HepG2 (cell line): ENCODE measurements at regions of chr15 and their contacts with region 1.

Region 1: GRCh38 chr15:71730277-71731144 is 79.8 kb upstream of the NR2E3 start:
- DNase-seq: peak; percentile 50
- ATAC-seq: peak; percentile 90
- H3K4me3 ChIP-seq: no peak overlapping the region
- H3K27ac ChIP-seq: no peak overlapping the region
- H3K4me1 ChIP-seq: peaks cover 25% of the 10 kb centered on the region
- H3K27me3 ChIP-seq: peaks cover 2 to 5% of the 10 kb centered on the region in 2 experiments; a peak in 2 of 5 replicates
- CTCF ChIP-seq: peak; percentile 89
- EP300 ChIP-seq: no peak
- POLR2A ChIP-seq: no peak
- RAD21 ChIP-seq: peak; percentile 79

Region 2: GRCh38 chr15:71575474-71576045 is 155.0 kb before region 1 on chr15:
- CTCF ChIA-PET with region 1: interaction called, 30 read pairs
- POLR2A ChIA-PET with region 1: no interaction called
- in situ Hi-C with region 1: loop called (anchors 10 kb)
- intact Hi-C with region 1: no loop called
- DNase-seq: peak; percentile 10
- ATAC-seq: no peak
- H3K4me3 ChIP-seq: no peak overlapping the region
- H3K27ac ChIP-seq: no peak overlapping the region
- H3K4me1 ChIP-seq: no peaks in the 10 kb centered on the region
- H3K27me3 ChIP-seq: no peaks in the 10 kb centered on the region
- CTCF ChIP-seq: peak; percentile 63
- EP300 ChIP-seq: no peak
- POLR2A ChIP-seq: no peak
- RAD21 ChIP-seq: peak; percentile 28; the same call in 1 of the 2 replicates

Region 3: GRCh38 chr15:71660501-71660900 is 70.0 kb before region 1 on chr15:
- CTCF ChIA-PET with region 1: no interaction called
- POLR2A ChIA-PET with region 1: no interaction called
- in situ Hi-C with region 1: no loop called
- intact Hi-C with region 1: loop called (anchors 1 kb)
- DNase-seq: no peak
- ATAC-seq: peak; percentile 29; the same call in 2 of the 3 replicates
- H3K4me3 ChIP-seq: peak overlapping the region in 1 of 3 experiments; percentile 2; a peak in 1 of 6 replicates
- H3K27ac ChIP-seq: peak overlapping the region; percentile 84
- H3K4me1 ChIP-seq: peaks cover 83% of the 10 kb centered on the region
- H3K27me3 ChIP-seq: no peaks in the 10 kb centered on the region
- CTCF ChIP-seq: no peak
- EP300 ChIP-seq: no peak
- POLR2A ChIP-seq: no peak
- RAD21 ChIP-seq: no peak